Activated CD4-positive, alpha-beta T cell treated with anti-CD3 and anti-CD28 coated beads for 36 hours (primary cell): ENCODE measurements at regions of chr20 and their contacts with region 1.

Region 1: GRCh38 chr20:32521780-32522525 is 63.2 kb downstream of the NOL4L start:
- DNase-seq: peak; percentile 83
- ATAC-seq: peak; percentile 78
- H3K4me3 Mint-ChIP-seq: no peak overlapping the region
- H3K27ac Mint-ChIP-seq: peak overlapping the region; percentile 43
- H3K4me1 Mint-ChIP-seq: peaks cover 59% of the 10 kb centered on the region
- H3K27me3 Mint-ChIP-seq: no peaks in the 10 kb centered on the region

Region 2: GRCh38 chr20:32509639-32510066 is 12.3 kb before region 1 on chr20:
- CTCF ChIA-PET with region 1: interaction called, 44 read pairs
- POLR2A ChIA-PET with region 1: no interaction called
- intact Hi-C with region 1: loop called in 1 of 2 experiments (anchors 2 kb)
- DNase-seq: peak; percentile 77
- ATAC-seq: peak; percentile 68
- H3K4me3 Mint-ChIP-seq: peak overlapping the region; percentile 70
- H3K27ac Mint-ChIP-seq: peak overlapping the region; percentile 90
- H3K4me1 Mint-ChIP-seq: peaks cover 86% of the 10 kb centered on the region
- H3K27me3 Mint-ChIP-seq: no peaks in the 10 kb centered on the region

Region 3: DNA sequence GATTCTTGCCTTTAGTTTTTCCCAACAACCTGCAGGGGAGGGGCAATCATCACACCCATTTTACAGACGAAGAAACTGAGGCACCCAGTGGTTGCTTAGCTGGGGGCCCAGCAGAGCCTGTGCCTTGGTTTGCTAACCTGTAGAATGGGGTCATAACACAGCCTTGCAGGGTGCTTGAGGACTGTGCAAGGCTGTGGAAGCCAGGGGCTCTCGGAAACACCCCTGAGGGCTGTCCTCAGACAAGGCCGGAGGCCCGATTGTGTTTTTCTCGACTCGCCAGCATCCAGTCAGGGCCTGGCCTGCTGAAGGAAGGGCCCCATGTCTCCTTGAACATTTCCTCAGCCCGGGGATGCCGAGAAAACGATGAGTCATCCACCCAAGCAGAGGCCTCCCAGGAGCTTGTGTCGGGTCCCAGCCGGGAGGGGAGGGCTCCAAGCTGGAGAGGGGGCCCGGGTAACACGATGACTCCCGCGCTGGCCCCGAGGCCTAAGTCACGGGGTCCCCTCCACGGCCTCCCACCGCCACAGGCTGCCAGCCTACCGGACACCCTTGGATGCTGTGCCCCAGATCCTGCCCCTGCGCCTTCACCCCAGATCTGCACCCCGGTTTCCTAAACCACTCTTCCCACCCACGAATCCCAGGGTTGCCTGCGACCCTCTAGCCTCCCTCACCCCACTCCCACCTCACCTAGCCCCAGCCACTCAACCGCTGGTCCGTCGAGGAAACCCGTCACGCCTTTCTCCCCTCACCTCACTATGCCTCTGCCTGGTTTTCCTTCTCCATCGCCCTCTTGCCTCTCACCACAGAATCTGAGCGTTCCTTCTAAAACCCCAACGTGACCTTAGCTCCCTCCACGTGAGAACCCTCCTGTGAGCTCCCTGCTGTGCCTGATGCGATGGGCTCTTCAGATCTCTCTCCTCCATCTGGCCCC is 52.6 kb after region 1 on chr20:
- CTCF ChIA-PET with region 1: interaction called, 11 read pairs
- POLR2A ChIA-PET with region 1: no interaction called
- intact Hi-C with region 1: no loop called
- DNase-seq: peak; percentile 78
- ATAC-seq: peak; percentile 80
- H3K4me3 Mint-ChIP-seq: no peak overlapping the region
- H3K27ac Mint-ChIP-seq: no peak overlapping the region
- H3K4me1 Mint-ChIP-seq: peaks cover 51% of the 10 kb centered on the region
- H3K27me3 Mint-ChIP-seq: no peaks in the 10 kb centered on the region

Region 4: DNA sequence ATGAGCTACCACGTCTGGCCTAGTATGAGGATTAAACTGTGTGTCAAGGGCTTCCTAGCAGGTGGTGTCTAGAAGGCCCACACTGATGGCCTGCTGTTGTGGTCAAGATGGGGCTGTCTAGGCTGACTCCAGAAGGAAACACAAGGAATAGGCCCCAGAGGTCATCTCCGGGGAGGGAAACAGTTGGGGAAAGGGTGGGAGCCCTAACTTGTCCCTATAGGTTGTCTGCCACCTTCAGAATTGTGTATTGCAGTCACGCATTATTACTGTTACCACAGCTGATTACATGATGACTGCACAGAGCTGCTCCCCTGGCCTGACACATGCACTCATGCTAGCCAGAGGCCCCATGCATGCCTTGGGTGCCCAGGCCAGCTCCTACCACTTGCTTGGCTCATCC is 124.5 kb after region 1 on chr20:
- CTCF ChIA-PET with region 1: interaction called, 214 read pairs
- POLR2A ChIA-PET with region 1: interaction called, 3 read pairs
- intact Hi-C with region 1: no loop called
- DNase-seq: no peak
- ATAC-seq: no peak
- H3K4me3 Mint-ChIP-seq: no peak overlapping the region
- H3K27ac Mint-ChIP-seq: no peak overlapping the region
- H3K4me1 Mint-ChIP-seq: peaks cover under 1% of the 10 kb centered on the region
- H3K27me3 Mint-ChIP-seq: no peaks in the 10 kb centered on the region